ENCODE measurements at regions of chr18 and their contacts with region 1.

Region 1: GRCh38 chr18:43283299-43283698 is 6.0 kb upstream of the SYT4 start:
- DNase-seq: no peak
- H3K4me3 ChIP-seq: no peak overlapping the region
- H3K27ac ChIP-seq: no peak overlapping the region
- H3K27me3 ChIP-seq: no peaks in the 10 kb centered on the region
- CTCF ChIP-seq: no peak

Region 2: GRCh38 chr18:42792731-42793130 is 490.6 kb before region 1 on chr18:
- CTCF ChIA-PET with region 1: no interaction called
- POLR2A ChIA-PET with region 1: interaction called, 11 read pairs
- DNase-seq: no peak
- H3K4me3 ChIP-seq: no peak overlapping the region
- H3K27ac ChIP-seq: no peak overlapping the region
- H3K27me3 ChIP-seq: no peaks in the 10 kb centered on the region
- CTCF ChIP-seq: no peak

Region 3: GRCh38 chr18:43303376-43303775 is 20.1 kb after region 1 on chr18:
- CTCF ChIA-PET with region 1: no interaction called
- POLR2A ChIA-PET with region 1: no interaction called
- DNase-seq: no peak
- H3K4me3 ChIP-seq: no peak overlapping the region
- H3K27ac ChIP-seq: no peak overlapping the region
- H3K27me3 ChIP-seq: no peaks in the 10 kb centered on the region
- CTCF ChIP-seq: no peak

Region 4: GRCh38 chr18:43341014-43341413 is 57.7 kb after region 1 on chr18:
- CTCF ChIA-PET with region 1: no interaction called
- POLR2A ChIA-PET with region 1: no interaction called
- DNase-seq: no peak
- H3K4me3 ChIP-seq: no peak overlapping the region
- H3K27ac ChIP-seq: no peak overlapping the region
- H3K27me3 ChIP-seq: no peaks in the 10 kb centered on the region
- CTCF ChIP-seq: no peak

Measured in AG04450 (cell line).